Activated naive CD4-positive, alpha-beta T cell treated with anti-CD3 and anti-CD28 coated beads, Interleukin-2, amount 10 ng/mL, durations not matched to agents 7 days and 5 days (primary cell): ENCODE measurements at regions of chr1 and their contacts with region 1.

Region 1: GRCh38 chr1:9494929-9495758 is 44.1 kb upstream of the SLC25A33 start:
- DNase-seq: peak; percentile 70
- H3K4me3 Mint-ChIP-seq: peak overlapping the region; percentile 32
- H3K27ac Mint-ChIP-seq: no peak overlapping the region
- H3K4me1 Mint-ChIP-seq: peaks cover 10% of the 10 kb centered on the region
- H3K27me3 Mint-ChIP-seq: peaks cover 45% of the 10 kb centered on the region

Region 2: GRCh38 chr1:9292361-9293240 is 202.5 kb before region 1 on chr1 and contains the start of gene SPSB1:
- CTCF ChIA-PET with region 1: interaction called, 31 read pairs
- DNase-seq: peak; percentile 76
- H3K4me3 Mint-ChIP-seq: peak within 1 kb of the TSS; percentile 62
- H3K27ac Mint-ChIP-seq: no peak within 1 kb of the TSS
- H3K4me1 Mint-ChIP-seq: peaks cover 12% of the 10 kb centered on the region
- H3K27me3 Mint-ChIP-seq: peaks cover 22% of the 10 kb centered on the region

Region 3: DNA sequence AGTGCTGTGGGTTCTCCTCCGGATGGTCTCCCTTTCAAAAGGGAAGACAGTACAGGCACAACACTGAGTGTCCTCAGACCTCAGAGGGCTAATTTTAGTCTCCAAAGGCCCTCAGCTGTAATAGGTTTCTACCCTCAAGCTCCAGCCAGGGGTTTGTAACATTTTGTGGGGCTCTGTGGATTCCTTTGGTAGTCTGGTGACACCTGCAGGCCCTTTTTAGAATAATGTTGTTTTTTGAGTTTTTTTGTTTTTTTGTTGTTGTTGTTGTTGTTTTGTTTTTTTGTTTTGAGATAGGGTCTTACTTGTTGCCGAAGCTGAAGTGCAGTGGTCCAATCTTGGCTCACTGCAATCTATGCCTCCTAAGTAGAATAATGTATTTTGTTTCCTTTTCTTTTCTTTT is 78.6 kb after region 1 on chr1:
- CTCF ChIA-PET with region 1: interaction called, 54 read pairs
- DNase-seq: no peak
- H3K4me3 Mint-ChIP-seq: no peak overlapping the region
- H3K27ac Mint-ChIP-seq: no peak overlapping the region
- H3K4me1 Mint-ChIP-seq: no peaks in the 10 kb centered on the region
- H3K27me3 Mint-ChIP-seq: no peaks in the 10 kb centered on the region